GM10248 (cell line): ENCODE measurements at regions of chr10 and their contacts with region 1.

Region 1: DNA sequence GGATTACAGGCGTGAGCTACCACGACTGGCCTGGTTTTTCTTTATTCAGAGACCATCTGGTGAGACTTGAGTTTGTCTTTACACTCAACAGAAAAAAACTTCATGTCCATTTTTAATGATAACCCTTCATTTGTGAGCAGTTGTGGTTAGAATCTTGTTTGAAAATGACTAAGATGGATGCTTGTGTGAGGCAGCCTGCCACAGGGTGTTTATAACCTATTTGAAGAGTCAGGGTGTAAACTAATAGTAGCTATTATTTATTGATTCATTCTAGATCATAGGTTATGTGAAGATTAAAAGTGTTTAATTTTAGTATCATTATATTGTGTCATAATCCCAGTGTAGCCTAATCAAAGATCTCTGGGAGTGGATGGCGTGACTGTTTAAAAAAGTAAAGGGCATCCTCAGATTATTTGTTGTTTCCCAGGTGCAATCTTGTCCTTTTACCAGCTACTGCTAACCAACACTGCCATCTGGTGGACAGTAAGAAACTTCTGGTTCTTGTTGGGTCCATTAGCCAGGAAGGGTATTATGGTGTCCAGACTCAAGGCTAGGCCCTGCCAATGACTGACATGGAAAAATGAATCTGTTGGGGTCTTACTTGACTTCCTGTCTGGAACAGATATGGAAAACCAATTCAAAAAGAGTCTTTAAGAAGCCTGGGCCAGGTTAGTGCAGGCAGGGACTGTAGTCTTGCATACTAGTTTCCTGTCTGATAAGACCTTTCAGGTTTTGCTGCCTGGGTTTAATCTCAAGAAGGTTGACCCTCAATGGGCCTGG is 24.9 kb downstream of the NRBF2 start:
- DNase-seq: peak; percentile 62
- CTCF ChIP-seq: peak; percentile 64

Region 2: DNA sequence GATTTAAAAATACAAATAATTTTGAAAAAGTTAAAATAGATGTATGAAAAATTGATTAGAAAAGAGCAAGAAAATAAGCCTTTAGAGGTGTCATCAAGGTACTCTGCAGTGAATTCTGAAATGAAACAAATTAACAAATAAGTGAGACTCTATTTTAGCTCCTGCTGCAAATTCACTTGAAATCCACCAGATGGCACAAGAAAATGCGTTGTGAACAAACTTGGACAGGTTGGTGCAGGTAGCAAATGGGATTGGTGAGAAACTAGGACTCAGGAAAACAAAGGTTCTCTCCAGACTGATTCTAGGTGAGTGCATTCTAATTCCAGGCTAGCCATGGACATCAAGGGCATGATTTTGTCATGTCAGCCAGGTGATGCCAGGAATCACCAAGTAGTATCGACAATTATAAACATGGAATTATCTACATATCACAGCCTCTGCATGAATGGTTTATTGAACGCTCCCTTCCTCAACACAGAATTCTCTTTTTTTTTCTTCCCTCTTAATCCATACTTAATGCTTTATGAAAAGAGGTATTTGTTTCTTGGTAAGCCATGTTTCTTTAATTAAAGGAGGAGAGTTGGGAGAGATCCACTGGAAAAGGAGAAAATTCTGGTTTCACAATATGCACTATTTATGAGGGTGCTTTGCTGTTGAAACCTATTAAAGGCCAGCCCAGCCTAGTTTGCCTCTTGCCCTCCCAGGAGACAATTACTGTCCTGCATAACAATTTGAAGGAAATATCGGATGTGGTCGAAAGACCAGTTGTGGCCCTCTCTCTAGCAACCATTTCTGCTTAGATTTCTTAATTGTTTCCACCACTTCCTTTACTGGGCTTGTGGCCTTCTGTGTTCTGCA is 665.8 kb before region 1 on chr10:
- CTCF ChIA-PET with region 1: interaction called, 26 read pairs
- POLR2A ChIA-PET with region 1: no interaction called
- DNase-seq: peak; percentile 34
- CTCF ChIP-seq: peak; percentile 63

Region 3: GRCh38 chr10:62594093-62594520 is 563.9 kb before region 1 on chr10:
- CTCF ChIA-PET with region 1: interaction called, 13 read pairs
- POLR2A ChIA-PET with region 1: no interaction called
- DNase-seq: peak; percentile 54
- CTCF ChIP-seq: peak; percentile 98

Region 4: DNA sequence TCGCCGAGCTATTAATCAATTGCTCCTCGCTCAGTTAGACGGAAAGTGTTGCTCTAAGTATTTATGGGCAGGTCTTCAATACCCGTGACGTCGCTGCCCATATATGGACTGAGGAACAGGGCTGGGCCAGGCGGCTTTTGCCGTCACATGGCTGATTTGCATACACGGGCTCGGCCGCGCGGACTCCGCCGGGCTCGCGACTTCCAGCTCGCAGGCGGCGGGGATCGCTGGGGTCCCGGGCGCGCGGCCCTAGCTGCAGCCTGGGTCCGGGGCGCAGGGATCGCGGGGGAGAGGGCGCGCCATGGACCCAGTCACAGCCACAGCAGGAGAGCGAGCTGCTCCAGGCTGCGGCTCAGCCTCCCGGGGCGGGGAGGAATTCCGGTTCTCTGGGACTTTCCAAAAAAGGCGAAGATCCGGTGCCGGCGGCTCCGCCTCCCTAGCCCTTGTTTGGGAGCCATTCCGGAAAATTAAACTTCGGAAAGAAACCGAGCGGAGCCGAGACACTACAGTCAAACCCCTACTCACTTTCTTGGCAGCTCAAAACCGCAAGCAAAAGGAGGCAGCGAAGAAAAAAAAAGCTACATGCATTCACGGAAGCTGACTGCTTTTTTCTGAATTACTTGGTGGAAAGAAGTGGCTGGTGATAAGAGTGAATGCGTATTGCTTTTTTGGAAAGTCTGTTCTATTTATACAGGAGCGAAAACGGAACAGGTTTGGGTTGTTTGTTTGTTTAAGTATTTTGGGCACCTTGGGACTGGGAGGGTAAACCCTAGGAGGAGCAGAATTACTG is 341.5 kb before region 1 on chr10 and contains the start of gene EGR2:
- CTCF ChIA-PET with region 1: interaction called, 16 read pairs
- POLR2A ChIA-PET with region 1: no interaction called
- DNase-seq: peak; percentile 93
- CTCF ChIP-seq: no peak

Region 5: GRCh38 chr10:63133056-63133820 is 24.8 kb before region 1 on chr10 and contains the start of gene NRBF2:
- CTCF ChIA-PET with region 1: interaction called, 23 read pairs
- POLR2A ChIA-PET with region 1: interaction called, 3 read pairs
- DNase-seq: peak; percentile 94
- CTCF ChIP-seq: no peak

Region 6: GRCh38 chr10:63145782-63146181 is 12.3 kb before region 1 on chr10:
- CTCF ChIA-PET with region 1: interaction called, 82 read pairs
- POLR2A ChIA-PET with region 1: no interaction called
- DNase-seq: no peak
- CTCF ChIP-seq: no peak